ENCODE measurements at regions of chr1 and their contacts with region 1.

Region 1: DNA sequence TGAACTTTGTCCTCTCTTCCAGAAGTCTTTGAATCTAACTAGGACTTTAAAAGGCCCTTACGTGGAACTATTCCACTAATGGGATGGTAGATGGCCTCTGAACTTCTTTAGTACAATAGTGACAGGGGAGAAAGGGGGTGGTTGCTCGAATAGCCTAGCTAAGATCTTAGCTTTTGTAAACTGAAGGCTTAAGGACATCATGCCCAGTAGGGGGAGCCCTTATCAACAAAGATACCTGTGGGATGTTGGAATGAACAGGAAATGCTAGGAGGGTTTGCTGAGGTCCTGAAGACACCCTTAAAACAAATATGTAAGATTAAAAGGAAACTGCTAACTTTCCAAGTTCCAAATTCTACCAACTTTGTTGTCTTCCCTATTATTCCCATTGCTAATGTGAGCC is 33.2 kb downstream of the NHLH2 start:
- DNase-seq: peak; percentile 27
- H3K4me3 Mint-ChIP-seq: no peak overlapping the region
- H3K27ac Mint-ChIP-seq: no peak overlapping the region
- H3K4me1 Mint-ChIP-seq: no peaks in the 10 kb centered on the region
- H3K27me3 Mint-ChIP-seq: peaks cover 2% of the 10 kb centered on the region

Region 2: GRCh38 chr1:115980998-115981993 is 173.6 kb after region 1 on chr1:
- intact Hi-C with region 1: loop called (anchors 1 kb)
- DNase-seq: no peak
- H3K4me3 Mint-ChIP-seq: no peak overlapping the region
- H3K27ac Mint-ChIP-seq: no peak overlapping the region
- H3K4me1 Mint-ChIP-seq: no peaks in the 10 kb centered on the region
- H3K27me3 Mint-ChIP-seq: peaks cover 30% of the 10 kb centered on the region

Region 3: GRCh38 chr1:116020668-116021275 is 213.0 kb after region 1 on chr1:
- intact Hi-C with region 1: loop called (anchors 1 kb)
- DNase-seq: no peak
- H3K4me3 Mint-ChIP-seq: no peak overlapping the region
- H3K27ac Mint-ChIP-seq: no peak overlapping the region
- H3K4me1 Mint-ChIP-seq: no peaks in the 10 kb centered on the region
- H3K27me3 Mint-ChIP-seq: peaks cover 12% of the 10 kb centered on the region

Region 4: GRCh38 chr1:116498789-116499628 is 691.3 kb after region 1 on chr1:
- intact Hi-C with region 1: loop called (anchors 5 kb)
- DNase-seq: peak; percentile 37
- H3K4me3 Mint-ChIP-seq: no peak overlapping the region
- H3K27ac Mint-ChIP-seq: peak overlapping the region; percentile 50
- H3K4me1 Mint-ChIP-seq: peaks cover 75% of the 10 kb centered on the region
- H3K27me3 Mint-ChIP-seq: no peaks in the 10 kb centered on the region

Measured in activated T-helper 1 cell treated with anti-CD3 and anti-CD28 coated beads, Interleukin-12 subunit alpha, Interleukin-12 subunit beta, Interleukin-2, Interleukin-4 antibody, amounts not matched to agents 30 ng/mL and 10 ng/mL and 1 ng/mL, durations not matched to agents 14 hours and 24 hours and 36 hours (primary cell).